Right lobe of liver (tissue), 6 donors: ENCODE measurements at regions of chr3 and their contacts with region 1.

Region 1: DNA sequence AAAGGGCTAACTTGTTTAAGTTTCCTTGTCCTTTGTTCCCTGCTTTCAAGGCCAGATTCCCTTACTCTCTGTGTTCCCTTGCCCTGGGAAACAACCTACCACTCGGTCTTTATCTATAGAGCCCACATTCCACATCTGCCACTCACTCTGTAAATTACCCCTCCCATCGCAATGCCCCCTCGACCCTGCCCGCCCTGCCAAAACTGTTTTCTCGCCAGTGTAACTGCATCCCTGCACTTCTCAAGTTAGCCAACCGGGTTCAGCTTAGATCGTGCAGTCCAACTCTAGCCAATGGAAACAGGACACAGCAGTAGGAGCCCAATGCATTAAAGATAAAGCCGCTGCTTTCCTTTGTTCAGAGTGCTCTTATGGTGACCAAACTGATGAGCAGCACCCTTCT is 263.6 kb downstream of the TBL1XR1 start:
- DNase-seq: no peak
- ATAC-seq: no peak
- H3K4me3 ChIP-seq: no peak overlapping the region
- H3K27ac ChIP-seq: no peak overlapping the region
- H3K4me1 ChIP-seq: peaks cover 0 to 23% (median 3%) of the 10 kb centered on the region in 4 donors
- H3K27me3 ChIP-seq: no peaks in the 10 kb centered on the region
- CTCF ChIP-seq: no peak
- POLR2A ChIP-seq: no peak

Region 2: DNA sequence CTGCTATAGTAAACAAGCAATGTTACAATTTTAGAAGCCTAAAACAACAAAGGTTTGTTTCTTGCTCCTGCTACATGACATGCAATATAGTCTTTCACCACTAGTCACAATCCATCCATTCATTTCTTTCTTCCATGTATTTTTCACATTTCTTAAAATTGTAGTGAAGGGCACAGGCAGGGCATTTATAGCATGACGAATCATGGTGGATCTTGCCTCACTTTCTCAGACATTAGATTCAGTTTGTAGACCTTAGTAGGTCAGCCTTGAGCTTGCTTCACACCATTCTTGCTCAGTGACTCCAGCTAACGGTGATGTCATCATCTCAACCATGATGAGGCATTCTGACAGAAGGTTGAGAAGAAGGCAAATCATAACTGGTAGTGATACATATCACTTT is 283.2 kb before region 1 on chr3:
- intact Hi-C with region 1: no loop called
- DNase-seq: no peak
- ATAC-seq: no peak
- H3K4me3 ChIP-seq: no peak overlapping the region
- H3K27ac ChIP-seq: no peak overlapping the region
- H3K4me1 ChIP-seq: no peaks in the 10 kb centered on the region
- H3K27me3 ChIP-seq: no peaks in the 10 kb centered on the region
- CTCF ChIP-seq: no peak
- POLR2A ChIP-seq: no peak

Region 3: GRCh38 chr3:176879710-176880109 is 54.0 kb before region 1 on chr3:
- intact Hi-C with region 1: loop called in 1 of 2 experiments (anchors 5 kb)
- DNase-seq: no peak
- ATAC-seq: no peak
- H3K4me3 ChIP-seq: no peak overlapping the region
- H3K27ac ChIP-seq: no peak overlapping the region
- H3K4me1 ChIP-seq: no peaks in the 10 kb centered on the region
- H3K27me3 ChIP-seq: no peaks in the 10 kb centered on the region
- CTCF ChIP-seq: no peak
- POLR2A ChIP-seq: no peak